Dorsolateral prefrontal cortex (tissue), 120 donors: ENCODE measurements at regions of chr14 and their contacts with region 1.

Region 1: DNA sequence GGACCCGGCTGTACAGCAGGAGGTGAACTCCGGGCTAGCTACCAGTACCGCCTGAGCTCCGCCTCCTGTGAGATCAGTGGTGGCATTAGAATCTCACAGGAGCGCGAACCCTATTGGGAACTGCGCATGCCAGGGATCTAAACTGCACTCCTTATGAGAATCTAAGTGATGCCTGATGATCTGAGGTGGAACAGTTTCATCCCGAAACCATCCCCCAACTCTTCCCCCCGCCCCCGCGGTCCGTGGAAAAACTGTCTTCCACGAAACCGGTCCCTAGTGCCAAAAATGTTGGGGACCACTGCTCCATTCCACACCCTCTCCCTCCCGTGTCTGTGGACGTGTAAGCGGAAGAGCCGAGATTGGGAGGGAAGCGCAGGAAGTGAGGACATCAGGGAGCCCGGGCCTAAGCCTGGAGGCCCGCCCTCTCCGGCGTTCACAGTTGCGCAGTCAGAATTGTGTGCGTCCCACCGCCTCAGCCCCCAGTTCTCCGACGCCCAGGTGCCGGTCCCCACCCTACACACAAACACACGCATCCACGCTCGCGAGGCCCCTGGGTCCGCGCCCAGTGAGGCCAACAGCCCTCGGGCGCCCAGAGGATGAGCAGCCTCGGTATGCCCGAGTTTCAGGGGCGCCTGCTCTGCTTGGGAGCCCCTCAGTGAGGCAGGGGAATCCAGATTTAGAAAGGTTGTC is 1.8 kb upstream of the RNASE4 start:
- DNase-seq: peak; percentile 79 to 94 (median 92)
- H3K4me3 ChIP-seq: peak overlapping the region; percentile 53 to 99 (median 94)
- H3K27ac ChIP-seq: peak overlapping the region; percentile 98 to 100 (median 100)
- H3K27me3 ChIP-seq: no peaks in the 10 kb centered on the region
- CTCF ChIP-seq: peak in 27 of 56 donors; percentile 7 to 38 (median 17)

Region 2: DNA sequence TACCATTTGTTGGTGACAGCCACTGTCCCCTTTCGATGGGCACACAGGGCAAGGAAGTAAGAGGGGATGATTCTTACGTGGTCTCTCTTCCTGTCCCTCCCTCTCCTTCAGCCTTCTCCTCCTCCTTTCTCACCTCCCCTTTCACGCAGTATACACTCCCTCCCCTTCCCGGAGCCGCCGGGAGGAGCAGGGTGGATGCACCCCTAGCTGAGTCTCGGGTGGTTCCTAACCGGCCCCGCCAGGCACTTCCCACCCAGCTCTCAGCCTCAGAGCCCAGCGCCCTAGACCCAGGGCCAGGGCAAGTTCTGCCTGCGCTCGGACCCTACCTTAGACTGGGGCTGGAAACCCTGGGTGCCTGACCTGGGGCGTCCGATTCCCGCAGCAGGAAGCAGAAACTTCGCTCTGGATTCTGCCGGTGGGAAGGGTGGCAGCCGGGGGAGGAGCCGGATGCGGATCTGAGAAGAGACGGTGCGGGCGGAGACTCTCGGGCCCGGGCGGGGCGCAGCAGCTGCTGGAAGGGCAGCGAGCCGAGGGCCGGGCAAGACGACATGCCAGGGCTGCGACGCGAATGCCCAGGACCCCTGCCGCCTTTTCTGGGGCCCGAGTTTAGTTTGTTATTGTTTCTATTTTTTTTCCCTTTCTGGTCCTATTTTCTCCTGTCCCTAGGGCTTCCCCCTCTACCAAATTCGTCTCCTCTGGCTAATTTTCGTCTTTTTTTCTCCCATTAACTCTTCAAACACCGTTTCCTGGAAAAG is 269.4 kb before region 1 on chr14 and contains the start of gene TEP1:
- intact Hi-C with region 1: loop called in 1 of 2 experiments (anchors 5 kb)
- DNase-seq: peak; percentile 63 to 86 (median 78)
- H3K4me3 ChIP-seq: peak within 1 kb of the TSS; percentile 53 to 96 (median 84)
- H3K27ac ChIP-seq: peak within 1 kb of the TSS; percentile 44 to 96 (median 88)
- H3K27me3 ChIP-seq: no peaks in the 10 kb centered on the region
- CTCF ChIP-seq: peak in 9 of 56 donors; percentile 12 to 43 (median 32)
- total RNA-seq, gene TEP1: 7.8 to 36.4 (median 17.7) TPM

Region 3: GRCh38 chr14:20461274-20462001 is 221.1 kb before region 1 on chr14 and contains the start of gene PIP4P1:
- intact Hi-C with region 1: loop called (anchors 2 to 5 kb)
- DNase-seq: peak; percentile 99 to 100 (median 99)
- H3K4me3 ChIP-seq: peak within 1 kb of the TSS; percentile 73 to 100 (median 95)
- H3K27ac ChIP-seq: peak within 1 kb of the TSS; percentile 63 to 98 (median 94)
- H3K27me3 ChIP-seq: no peaks in the 10 kb centered on the region
- CTCF ChIP-seq: peak in 14 of 56 donors; percentile 4 to 52 (median 22)
- total RNA-seq, gene PIP4P1: 40.7 to 70.2 (median 53.0) TPM

Region 4: GRCh38 chr14:20613094-20614037 is 69.2 kb before region 1 on chr14:
- intact Hi-C with region 1: loop called (anchors 1 kb)
- DNase-seq: peak; percentile 60 to 86 (median 72)
- H3K4me3 ChIP-seq: peak overlapping the region; percentile 43 to 78 (median 64)
- H3K27ac ChIP-seq: peak overlapping the region in 57 of 59 donors; percentile 7 to 88 (median 73)
- H3K27me3 ChIP-seq: no peaks in the 10 kb centered on the region
- CTCF ChIP-seq: peak; percentile 33 to 81 (median 66)

Region 5: DNA sequence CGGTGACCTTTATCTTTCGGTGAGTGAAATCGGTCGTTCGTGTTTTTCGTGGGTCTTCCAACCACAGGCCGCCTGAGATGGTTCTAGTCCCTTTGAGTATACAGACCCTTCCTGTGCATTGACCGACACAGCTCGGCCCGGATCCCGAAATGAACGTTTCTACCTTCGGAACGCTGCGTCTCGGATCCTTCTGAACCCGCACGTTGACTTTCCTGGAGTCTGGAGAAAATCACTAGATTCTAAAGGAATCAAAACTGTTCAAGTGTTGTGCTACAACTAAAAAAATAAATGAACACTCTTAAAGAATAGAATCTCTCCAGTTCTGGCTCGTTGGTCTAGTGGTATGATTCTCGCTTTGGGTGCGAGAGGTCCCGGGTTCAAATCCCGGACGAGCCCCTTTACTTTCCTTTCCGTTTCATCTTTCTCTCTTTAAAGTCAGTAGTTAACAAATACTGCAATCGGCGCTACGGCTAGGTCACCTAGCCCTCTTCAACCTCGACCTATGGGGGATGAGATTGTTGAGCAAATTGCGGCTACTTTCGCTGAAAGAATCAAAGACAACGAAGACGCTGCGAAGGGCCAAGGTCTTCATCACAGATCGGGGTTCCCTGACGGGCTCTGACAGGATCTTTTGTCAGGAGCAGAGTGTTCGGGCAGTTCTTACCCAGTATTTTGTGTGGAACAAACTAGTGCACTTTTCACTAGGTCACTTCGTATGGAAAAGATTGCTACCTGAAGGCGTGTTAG is 49.7 kb before region 1 on chr14:
- intact Hi-C with region 1: loop called (anchors 5 kb)
- DNase-seq: peak in 2 of 10 donors; percentile 33 to 55
- H3K4me3 ChIP-seq: peak overlapping the region; percentile 15 to 69 (median 46)
- H3K27ac ChIP-seq: peak overlapping the region in 2 of 59 donors; percentile 28 to 59
- H3K27me3 ChIP-seq: peaks cover 0 to 80% (median 27%) of the 10 kb centered on the region in 45 donors
- CTCF ChIP-seq: peak in 1 of 56 donors; percentile 24

Region 6: DNA sequence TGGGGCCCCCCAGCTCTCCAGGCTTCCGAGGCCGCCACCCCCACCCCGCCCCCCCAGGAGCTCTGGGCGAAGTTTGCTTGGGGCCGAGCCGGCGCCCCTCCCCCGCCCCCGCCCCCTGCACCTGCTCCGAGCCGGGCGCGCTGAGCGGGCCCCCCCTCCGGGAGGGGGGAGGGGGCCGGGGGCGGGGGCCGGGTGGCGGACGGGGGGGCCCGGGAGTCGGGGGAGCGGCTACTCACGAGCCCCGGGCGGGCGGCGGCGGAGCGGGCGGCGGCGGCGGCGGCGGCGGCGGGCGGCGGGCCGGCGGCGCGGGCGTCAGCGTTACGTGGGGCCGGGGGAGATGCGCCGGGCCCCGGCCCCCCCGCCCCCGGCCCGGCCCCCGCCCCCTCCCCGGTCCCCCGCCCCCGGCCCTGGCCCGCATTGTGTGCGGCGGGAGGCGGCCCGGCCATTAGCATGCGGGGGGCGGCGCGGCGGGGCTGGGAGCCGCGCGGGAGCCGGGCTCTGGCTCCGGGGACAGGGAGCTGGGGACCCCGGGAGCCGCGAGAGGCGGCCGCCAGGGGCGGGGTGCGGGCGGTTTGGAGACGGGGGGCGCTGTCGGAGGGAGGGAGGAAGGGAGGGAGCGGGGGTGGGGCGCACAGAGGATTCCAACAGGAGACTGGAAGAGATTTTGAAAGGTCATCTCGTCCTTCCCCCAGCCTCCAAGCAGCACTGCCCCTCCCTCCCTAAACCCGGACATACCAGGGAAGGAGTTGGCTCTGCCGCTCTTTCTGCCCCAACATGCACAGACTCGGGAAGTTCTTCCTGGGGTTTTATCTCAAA is 415.7 kb after region 1 on chr14 and contains the start of gene ZNF219:
- intact Hi-C with region 1: loop called in 1 of 2 experiments (anchors 5 kb)
- DNase-seq: peak in 5 of 10 donors; percentile 45 to 65 (median 56)
- H3K4me3 ChIP-seq: peak within 1 kb of the TSS; percentile 40 to 82 (median 66)
- H3K27ac ChIP-seq: peak within 1 kb of the TSS; percentile 70 to 96 (median 90)
- H3K27me3 ChIP-seq: no peaks in the 10 kb centered on the region
- CTCF ChIP-seq: peak in 19 of 56 donors; percentile 8 to 34 (median 17)
- total RNA-seq, gene ZNF219: 12.5 to 59.8 (median 25.2) TPM